Heart left ventricle (tissue), 16 donors: ENCODE measurements at regions of chr2 and their contacts with region 1.

Region 1: DNA sequence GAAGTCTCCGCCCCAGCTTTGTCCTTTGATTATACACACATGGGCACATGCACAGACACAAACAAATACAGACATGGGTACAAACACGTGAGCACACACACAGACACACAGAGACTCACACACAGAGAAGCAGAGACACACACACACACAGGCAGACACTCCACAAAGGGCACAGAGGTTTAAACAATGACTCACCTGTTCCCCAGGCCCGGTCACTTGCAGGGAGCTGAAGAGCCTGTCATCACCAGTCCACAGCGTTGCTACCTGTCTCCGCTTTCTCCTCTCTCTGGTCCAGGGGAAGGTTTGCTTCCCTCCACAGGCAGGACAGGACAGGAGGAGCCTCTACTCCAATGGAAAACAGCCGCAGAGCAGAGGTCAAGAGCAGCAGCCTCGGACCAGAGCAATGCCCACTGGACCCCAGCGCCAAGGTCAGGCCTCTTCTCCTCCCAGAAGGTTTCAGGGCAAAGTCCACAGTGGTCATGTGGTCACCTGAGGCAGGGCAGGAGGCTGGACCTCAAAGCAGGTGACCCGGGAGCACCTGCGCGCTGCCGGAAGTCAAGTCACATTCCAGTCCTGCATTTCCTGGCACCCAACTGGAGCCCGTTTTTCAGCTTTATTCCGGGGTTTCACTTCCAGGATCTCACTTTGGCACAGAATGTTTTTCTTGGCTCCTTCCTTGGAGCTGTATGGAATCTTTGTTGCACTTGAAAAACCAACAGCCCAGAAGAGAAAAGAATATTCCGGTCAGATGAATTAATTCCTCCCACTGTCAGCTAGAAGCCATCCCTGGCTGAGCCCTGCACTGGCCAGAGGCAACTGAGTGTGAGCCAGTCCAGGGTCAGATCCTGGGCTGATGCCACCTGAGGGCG is at the start of gene RAB17:
- DNase-seq: peak in 2 of 5 donors; percentile 39 to 79
- ATAC-seq: peak in 3 of 4 donors; percentile 34 to 77 (median 52)
- H3K4me3 ChIP-seq: peak within 1 kb of the TSS in 1 of 12 donors; percentile 31
- H3K27ac ChIP-seq: peak within 1 kb of the TSS in 1 of 12 donors; percentile 51
- H3K4me1 ChIP-seq: peaks cover 0 to 38% (median 21%) of the 10 kb centered on the region in 12 donors
- H3K27me3 ChIP-seq: peaks cover 0 to 2% (median 0%) of the 10 kb centered on the region in 9 donors
- CTCF ChIP-seq: no peak
- POLR2A ChIP-seq: no peak
- total RNA-seq, gene RAB17: 1.1 to 7.3 (median 3.6) TPM

Region 2: DNA sequence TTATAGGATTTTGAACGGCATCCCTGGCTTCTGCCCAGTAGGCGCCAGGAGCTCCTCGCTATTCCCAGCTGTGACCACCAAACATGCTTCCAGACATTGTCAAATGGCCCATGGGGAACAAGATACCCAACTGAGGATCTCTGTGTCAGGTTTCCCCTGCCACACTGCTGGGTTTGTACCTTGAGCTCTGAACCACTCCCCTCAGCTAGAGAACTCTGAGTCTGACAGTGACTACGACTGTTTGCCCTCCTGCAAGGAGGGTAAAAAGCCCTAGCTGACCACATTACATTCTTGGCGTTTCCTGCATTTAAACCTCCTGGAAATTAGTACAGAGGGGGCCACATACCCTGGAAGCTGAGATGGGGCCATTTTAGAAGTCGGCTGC is 49.3 kb after region 1 on chr2:
- intact Hi-C with region 1: loop called in 1 of 10 experiments (anchors 10 kb)
- DNase-seq: no peak
- ATAC-seq: peak in 2 of 4 donors; percentile 2 to 3
- H3K4me3 ChIP-seq: no peak overlapping the region
- H3K27ac ChIP-seq: peak overlapping the region in 9 of 12 donors; percentile 24 to 79 (median 61)
- H3K4me1 ChIP-seq: peaks cover 0 to 53% (median 17%) of the 10 kb centered on the region in 12 donors
- H3K27me3 ChIP-seq: no peaks in the 10 kb centered on the region
- CTCF ChIP-seq: no peak
- POLR2A ChIP-seq: no peak

Region 3: GRCh38 chr2:237714690-237715458 is 124.4 kb after region 1 on chr2:
- intact Hi-C with region 1: no loop called
- DNase-seq: peak in 1 of 5 donors; percentile 58
- ATAC-seq: peak; percentile 62 to 80 (median 74)
- H3K4me3 ChIP-seq: peak overlapping the region in 9 of 12 donors; percentile 2 to 38 (median 24)
- H3K27ac ChIP-seq: peak overlapping the region; percentile 30 to 89 (median 74)
- H3K4me1 ChIP-seq: peaks cover 5 to 75% (median 51%) of the 10 kb centered on the region in 12 donors
- H3K27me3 ChIP-seq: no peaks in the 10 kb centered on the region
- CTCF ChIP-seq: no peak
- POLR2A ChIP-seq: no peak

Region 4: GRCh38 chr2:237752761-237753165 is 162.3 kb after region 1 on chr2:
- intact Hi-C with region 1: loop called in 2 of 10 experiments (anchors 5 kb)
- DNase-seq: no peak
- ATAC-seq: peak in 2 of 4 donors; percentile 23 to 27
- H3K4me3 ChIP-seq: no peak overlapping the region
- H3K27ac ChIP-seq: peak overlapping the region in 1 of 12 donors; percentile 6
- H3K4me1 ChIP-seq: peaks cover 0 to 10% (median 0%) of the 10 kb centered on the region in 12 donors
- H3K27me3 ChIP-seq: no peaks in the 10 kb centered on the region
- CTCF ChIP-seq: no peak
- POLR2A ChIP-seq: no peak